MCF 10A (cell line): ENCODE measurements at regions of chr7 and their contacts with region 1.

Region 1: GRCh38 chr7:15015545-15016326 is 113.2 kb upstream of the DGKB start:
- DNase-seq: peak; percentile 86
- H3K4me3 Mint-ChIP-seq: peak overlapping the region; percentile 43
- H3K27ac Mint-ChIP-seq: no peak overlapping the region
- H3K4me1 Mint-ChIP-seq: no peaks in the 10 kb centered on the region
- H3K27me3 Mint-ChIP-seq: peaks cover 57% of the 10 kb centered on the region
- CTCF ChIP-seq: peak; percentile 55

Region 2: DNA sequence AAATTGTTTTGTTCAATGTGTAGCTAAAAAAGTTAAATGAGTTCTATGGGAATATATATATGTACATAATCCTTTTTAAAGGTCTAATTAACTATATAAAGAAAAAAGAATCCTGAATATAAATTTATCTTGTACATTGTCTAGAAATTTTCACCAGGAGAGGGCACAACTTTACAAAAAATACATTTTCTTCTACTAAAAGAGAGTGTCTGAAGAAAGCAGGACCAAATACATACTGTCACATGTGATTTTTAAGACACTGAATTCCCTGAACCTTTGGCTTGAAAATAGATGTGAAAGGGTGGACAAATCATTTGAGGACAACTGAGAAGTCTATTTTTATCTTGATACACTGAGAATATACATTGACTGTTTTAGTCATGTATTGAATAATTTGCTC is 317.5 kb before region 1 on chr7:
- CTCF ChIA-PET with region 1: no interaction called
- POLR2A ChIA-PET with region 1: no interaction called
- intact Hi-C with region 1: loop called (anchors 5 kb)
- DNase-seq: no peak
- H3K4me3 Mint-ChIP-seq: no peak overlapping the region
- H3K27ac Mint-ChIP-seq: no peak overlapping the region
- H3K4me1 Mint-ChIP-seq: no peaks in the 10 kb centered on the region
- H3K27me3 Mint-ChIP-seq: peaks cover 47% of the 10 kb centered on the region
- CTCF ChIP-seq: peak; percentile 13

Region 3: GRCh38 chr7:15005672-15006071 is 10.1 kb before region 1 on chr7:
- CTCF ChIA-PET with region 1: interaction called, 14 read pairs
- POLR2A ChIA-PET with region 1: no interaction called
- intact Hi-C with region 1: no loop called
- DNase-seq: no peak
- H3K4me3 Mint-ChIP-seq: no peak overlapping the region
- H3K27ac Mint-ChIP-seq: no peak overlapping the region
- H3K4me1 Mint-ChIP-seq: no peaks in the 10 kb centered on the region
- H3K27me3 Mint-ChIP-seq: peaks cover 18% of the 10 kb centered on the region
- CTCF ChIP-seq: no peak

Region 4: DNA sequence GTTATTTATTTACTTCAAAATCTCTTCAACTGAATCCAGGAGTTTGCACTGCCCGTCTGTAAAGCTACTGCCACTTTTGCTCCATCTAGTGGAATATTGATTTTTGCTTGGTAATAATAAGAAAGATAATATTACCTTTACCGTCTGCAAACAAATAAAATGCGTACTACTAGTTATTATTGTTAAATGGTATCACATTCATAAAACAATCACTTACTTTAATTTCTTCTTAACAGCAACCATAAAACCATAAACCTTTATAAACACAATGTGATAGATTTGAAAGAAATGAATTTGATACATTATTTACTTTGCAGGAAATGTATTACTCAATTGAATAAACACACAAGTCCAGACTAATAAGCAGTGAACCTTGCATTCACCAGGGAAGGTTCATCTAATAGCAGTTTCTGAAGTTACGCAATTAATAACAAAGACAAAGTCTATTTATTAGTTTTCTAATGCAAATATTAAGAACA is 539.7 kb after region 1 on chr7:
- CTCF ChIA-PET with region 1: no interaction called
- POLR2A ChIA-PET with region 1: no interaction called
- intact Hi-C with region 1: no loop called
- DNase-seq: no peak
- H3K4me3 Mint-ChIP-seq: no peak overlapping the region
- H3K27ac Mint-ChIP-seq: no peak overlapping the region
- H3K4me1 Mint-ChIP-seq: no peaks in the 10 kb centered on the region
- H3K27me3 Mint-ChIP-seq: peaks cover 37% of the 10 kb centered on the region
- CTCF ChIP-seq: no peak